ENCODE measurements at regions of chr14 and their contacts with region 1.

Region 1: GRCh38 chr14:72535485-72535884 is 358.4 kb downstream of the DPF3 start:
- DNase-seq: peak in 4 of 5 donors; percentile 34 to 47 (median 40)
- H3K4me3 ChIP-seq: no peak overlapping the region
- H3K4me3 Mint-ChIP-seq: peak overlapping the region in 6 of 8 donors; percentile 35 to 86 (median 56)
- H3K27ac ChIP-seq: no peak overlapping the region
- H3K27ac Mint-ChIP-seq: peak overlapping the region in 2 of 7 donors; percentile 9 to 30
- H3K4me1 ChIP-seq: peaks cover 65% of the 10 kb centered on the region
- H3K4me1 Mint-ChIP-seq: peaks cover 38 to 73% (median 56%) of the 10 kb centered on the region in 4 donors
- H3K27me3 ChIP-seq: no peaks in the 10 kb centered on the region
- H3K27me3 Mint-ChIP-seq: no peaks in the 10 kb centered on the region

Region 2: DNA sequence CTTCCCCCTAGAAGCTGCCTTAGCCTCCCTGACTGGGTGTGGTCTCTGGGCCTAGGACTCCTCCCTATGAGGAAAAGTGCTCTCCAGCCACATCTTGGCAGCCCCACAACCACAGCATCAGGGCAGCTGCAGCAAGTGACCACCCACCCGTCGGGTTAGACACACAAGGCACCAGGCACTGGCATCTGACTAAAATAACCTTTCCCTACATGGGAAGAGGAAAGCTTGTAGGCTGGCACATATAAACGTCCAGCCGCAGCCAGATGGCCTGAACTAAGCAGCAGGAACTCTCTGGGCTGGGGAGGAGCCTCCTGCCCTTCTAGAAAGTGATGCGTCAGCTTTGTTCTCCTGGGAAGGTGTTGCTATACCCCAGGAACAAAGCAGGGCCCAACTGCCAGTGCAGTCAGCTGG is 29.7 kb after region 1 on chr14:
- CTCF ChIA-PET with region 1: no interaction called
- POLR2A ChIA-PET with region 1: no interaction called
- intact Hi-C with region 1: no loop called
- DNase-seq: no peak
- H3K4me3 ChIP-seq: no peak overlapping the region
- H3K4me3 Mint-ChIP-seq: no peak overlapping the region
- H3K27ac ChIP-seq: no peak overlapping the region
- H3K27ac Mint-ChIP-seq: no peak overlapping the region
- H3K4me1 ChIP-seq: no peaks in the 10 kb centered on the region
- H3K4me1 Mint-ChIP-seq: peaks cover 0 to 4% (median 0%) of the 10 kb centered on the region in 4 donors
- H3K27me3 ChIP-seq: no peaks in the 10 kb centered on the region
- H3K27me3 Mint-ChIP-seq: no peaks in the 10 kb centered on the region

Region 3: GRCh38 chr14:72594099-72594901 is 58.8 kb after region 1 on chr14:
- CTCF ChIA-PET with region 1: no interaction called
- POLR2A ChIA-PET with region 1: no interaction called
- intact Hi-C with region 1: loop called (anchors 5 kb)
- DNase-seq: peak; percentile 62 to 72 (median 67)
- H3K4me3 ChIP-seq: no peak overlapping the region
- H3K4me3 Mint-ChIP-seq: peak overlapping the region in 7 of 8 donors; percentile 22 to 78 (median 62)
- H3K27ac ChIP-seq: no peak overlapping the region
- H3K27ac Mint-ChIP-seq: peak overlapping the region; percentile 3 to 71 (median 54)
- H3K4me1 ChIP-seq: peaks cover 60% of the 10 kb centered on the region
- H3K4me1 Mint-ChIP-seq: peaks cover 37 to 68% (median 52%) of the 10 kb centered on the region in 4 donors
- H3K27me3 ChIP-seq: no peaks in the 10 kb centered on the region
- H3K27me3 Mint-ChIP-seq: peaks cover 0 to 3% of the 10 kb centered on the region in 2 donors

Measured in CD4-positive, alpha-beta memory T cell (primary cell).